HEK293T (cell line): ENCODE measurements at regions of chr5 and their contacts with region 1.

Region 1: DNA sequence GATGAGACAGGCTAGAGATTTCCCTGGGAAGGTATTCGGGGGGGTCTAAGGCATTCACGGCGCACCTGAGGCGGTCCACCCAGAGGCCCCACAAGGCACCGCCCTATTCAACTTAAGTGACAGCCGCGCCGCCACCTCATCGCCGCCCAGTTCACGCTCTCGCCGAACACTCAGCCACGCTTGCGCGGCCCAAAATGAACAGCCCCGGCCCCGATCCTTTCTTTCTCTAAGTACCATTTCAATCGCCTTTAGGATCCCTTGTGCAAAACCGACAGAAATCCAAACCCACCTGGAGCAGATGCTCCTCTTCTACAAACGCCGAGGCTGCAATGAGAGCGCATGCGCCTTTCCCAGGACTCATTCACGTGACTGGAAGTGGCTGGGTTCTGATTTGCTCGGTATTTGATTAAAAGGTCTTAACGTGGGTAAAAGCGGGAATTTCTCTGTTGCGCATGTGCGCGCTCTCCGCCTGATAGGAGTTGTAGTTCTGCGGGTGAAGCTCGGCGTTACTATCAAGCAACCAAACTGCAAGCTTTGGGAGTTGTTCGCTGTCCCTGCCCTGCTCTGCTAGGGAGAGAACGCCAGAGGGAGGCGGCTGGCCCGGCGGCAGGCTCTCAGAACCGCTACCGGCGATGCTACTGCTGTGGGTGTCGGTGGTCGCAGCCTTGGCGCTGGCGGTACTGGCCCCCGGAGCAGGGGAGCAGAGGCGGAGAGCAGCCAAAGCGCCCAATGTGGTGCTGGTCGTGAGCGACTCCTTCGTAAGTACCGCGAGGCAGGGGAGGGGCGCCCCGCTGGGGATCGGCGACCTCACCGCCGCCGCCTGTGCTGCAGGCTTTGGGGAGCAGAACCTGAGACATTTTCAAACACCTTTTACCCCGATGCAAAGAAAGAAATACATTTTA is at the starts of genes ARSK and SKIC3:
- DNase-seq: peak; percentile 89

Region 2: GRCh38 chr5:95543017-95543705 is 11.7 kb before region 1 on chr5:
- CTCF ChIA-PET with region 1: no interaction called
- POLR2A ChIA-PET with region 1: interaction called, 13 read pairs
- DNase-seq: no peak

Region 3: GRCh38 chr5:95565280-95565920 is 10.5 kb after region 1 on chr5:
- CTCF ChIA-PET with region 1: no interaction called
- POLR2A ChIA-PET with region 1: interaction called, 10 read pairs
- DNase-seq: no peak

Region 4: GRCh38 chr5:95600557-95600956 is 45.7 kb after region 1 on chr5:
- CTCF ChIA-PET with region 1: no interaction called
- POLR2A ChIA-PET with region 1: no interaction called
- DNase-seq: no peak